ENCODE measurements at regions of chr2 and their contacts with region 1.

Region 1: DNA sequence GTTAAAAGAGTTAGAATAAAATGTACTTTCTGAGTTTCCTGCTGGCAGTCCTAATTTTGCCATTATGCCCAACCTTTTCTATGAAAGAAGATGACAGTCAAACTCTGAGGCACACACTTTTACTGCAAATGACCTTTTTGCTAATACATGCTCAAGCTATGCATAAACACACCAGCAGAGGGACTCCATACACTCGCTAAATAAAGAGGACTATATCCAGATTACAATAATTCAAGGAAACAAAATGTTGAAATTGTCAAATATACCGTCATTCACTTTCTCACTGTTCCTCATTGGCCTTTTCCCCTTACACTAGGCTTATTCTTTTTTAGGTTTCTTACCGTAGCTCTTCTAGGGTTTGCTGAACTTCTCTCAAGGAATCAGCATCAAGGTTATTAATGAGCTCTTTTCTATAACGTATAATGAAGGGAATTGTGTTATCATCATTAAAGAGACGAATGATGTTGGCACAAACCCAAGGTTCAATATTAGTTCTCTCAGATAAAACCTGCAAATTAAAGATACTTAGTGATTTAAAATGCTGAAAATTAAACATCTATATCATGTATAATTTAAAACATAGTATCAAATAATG is 25.7 kb downstream of the SRBD1 start:
- DNase-seq: no peak
- H3K4me3 ChIP-seq: no peak overlapping the region
- CTCF ChIP-seq: peak; percentile 56

Region 2: DNA sequence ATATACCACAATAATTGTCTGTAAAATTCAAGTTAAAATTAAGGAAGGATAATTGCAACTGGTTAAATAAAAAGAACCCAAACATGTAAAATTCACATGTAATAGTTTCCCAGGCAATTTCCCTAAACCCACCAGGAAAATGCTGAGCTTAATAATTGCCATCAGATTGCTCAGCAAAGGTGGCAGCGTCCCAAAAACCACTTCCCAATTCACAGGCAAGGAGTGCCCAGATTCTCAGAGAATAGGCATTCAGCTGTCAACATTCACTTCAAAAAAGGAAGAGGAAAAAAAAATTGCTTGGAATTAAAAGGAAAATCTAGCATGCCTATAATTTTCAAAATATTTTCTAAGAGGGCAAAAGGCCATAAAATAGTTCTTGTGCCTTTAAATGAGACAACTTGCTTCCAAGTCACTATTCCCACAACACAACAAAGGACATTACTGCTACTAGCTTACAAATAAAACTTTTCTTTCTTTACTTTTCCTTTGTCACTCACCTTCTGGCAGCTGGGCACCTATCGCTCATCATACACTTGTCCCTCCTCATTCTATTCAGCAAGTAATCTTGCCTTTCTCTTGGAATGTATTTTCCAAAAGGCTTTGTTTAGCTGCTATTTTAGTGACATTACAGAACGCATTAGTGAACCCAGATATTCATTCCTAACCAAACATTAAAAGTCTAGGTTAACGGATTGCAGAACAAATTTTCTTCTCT is 10.5 kb after region 1 on chr2:
- CTCF ChIA-PET with region 1: interaction called, 45 read pairs
- POLR2A ChIA-PET with region 1: no interaction called
- DNase-seq: peak; percentile 42
- H3K4me3 ChIP-seq: no peak overlapping the region
- CTCF ChIP-seq: no peak

Region 3: DNA sequence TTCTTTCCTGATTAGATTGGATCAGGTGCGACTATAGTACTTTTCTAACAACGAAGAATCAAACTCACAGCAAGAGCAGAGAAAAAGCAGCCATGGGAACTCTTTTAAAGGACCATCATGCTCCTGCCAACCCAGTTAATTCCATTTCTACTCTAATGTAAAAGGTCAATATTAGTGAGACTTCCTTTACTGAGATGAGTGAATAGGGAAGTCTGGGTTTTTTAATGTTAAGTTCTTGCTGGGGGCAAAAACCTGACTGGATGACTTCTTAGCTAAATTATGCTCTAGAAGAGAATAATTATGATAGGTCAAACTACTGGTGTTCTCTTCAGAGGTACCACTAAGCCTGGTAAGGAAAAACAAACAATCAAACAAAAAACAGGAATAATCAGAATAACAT is 17.3 kb after region 1 on chr2:
- CTCF ChIA-PET with region 1: interaction called, 45 read pairs
- POLR2A ChIA-PET with region 1: no interaction called
- DNase-seq: no peak
- H3K4me3 ChIP-seq: no peak overlapping the region
- CTCF ChIP-seq: no peak

Region 4: GRCh38 chr2:45607701-45608100 is 22.3 kb after region 1 on chr2:
- CTCF ChIA-PET with region 1: interaction called, 20 read pairs
- POLR2A ChIA-PET with region 1: no interaction called
- DNase-seq: no peak
- H3K4me3 ChIP-seq: no peak overlapping the region
- CTCF ChIP-seq: peak; percentile 35

Region 5: DNA sequence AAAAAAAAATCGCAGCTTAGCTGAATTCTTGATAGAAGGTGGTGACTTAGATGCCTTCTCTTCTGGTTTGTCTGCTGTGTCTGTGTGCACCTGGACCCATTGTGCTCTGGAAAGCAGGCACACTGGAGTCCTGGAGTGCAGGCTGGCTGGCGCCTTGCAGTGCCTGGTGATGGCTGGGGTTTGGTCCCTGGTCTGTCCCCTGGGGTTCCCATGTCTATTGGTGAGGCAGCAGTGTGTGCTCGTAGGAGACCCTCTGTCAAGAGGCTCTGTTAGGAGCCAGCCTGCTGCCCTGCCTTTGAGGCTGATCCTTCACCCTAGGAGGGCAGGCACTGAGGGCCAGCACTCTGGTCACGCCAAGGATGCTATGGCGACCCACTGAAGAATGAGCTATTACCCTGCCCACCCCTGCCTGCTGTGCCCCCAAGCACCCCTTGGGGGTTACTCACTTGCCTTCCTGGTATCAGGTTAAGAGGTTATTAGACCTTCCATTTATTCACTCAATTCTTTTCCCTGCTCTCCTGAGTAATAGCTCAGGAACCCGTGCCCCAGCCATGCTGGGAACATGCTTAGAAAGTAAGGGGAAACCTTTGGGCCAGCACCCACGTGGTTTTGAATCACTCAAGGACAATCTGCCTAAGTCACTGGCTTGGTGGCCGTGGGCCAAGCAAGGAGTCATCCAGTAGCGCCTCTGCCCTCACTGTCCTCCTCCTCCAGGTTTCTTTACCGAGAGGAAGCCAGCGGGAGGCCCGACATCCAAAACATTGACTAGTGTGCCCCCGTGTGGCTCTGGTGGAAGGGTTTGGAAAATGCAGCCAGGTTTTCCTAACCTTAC is 350.6 kb after region 1 on chr2:
- CTCF ChIA-PET with region 1: interaction called, 25 read pairs
- POLR2A ChIA-PET with region 1: no interaction called
- DNase-seq: peak; percentile 91
- H3K4me3 ChIP-seq: no peak overlapping the region
- CTCF ChIP-seq: peak; percentile 81